ENCODE measurements at regions of chr15 and their contacts with region 1.

Region 1: DNA sequence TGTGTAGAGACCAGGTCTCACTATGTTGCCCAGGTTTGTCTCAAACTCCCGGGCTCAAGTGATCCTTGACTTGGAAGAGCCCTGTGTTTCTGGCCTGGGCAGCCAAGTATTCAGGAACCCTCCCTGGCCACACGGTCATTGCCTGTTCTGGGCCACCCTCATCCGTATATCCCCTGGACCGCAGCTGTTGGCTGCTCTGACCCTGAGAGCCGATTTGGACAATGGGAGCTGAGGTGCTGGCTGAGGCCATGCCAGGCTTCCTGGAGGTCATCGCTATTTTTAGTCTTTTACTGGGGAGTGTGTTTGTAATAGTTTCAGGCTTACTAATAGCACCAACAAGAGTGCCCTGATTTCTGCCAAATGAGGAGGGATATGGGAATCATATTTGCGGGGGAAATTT is 60.7 kb downstream of the ADAMTS7 start:
- DNase-seq: no peak
- ATAC-seq: no peak
- H3K4me3 ChIP-seq: no peak overlapping the region
- H3K4me3 Mint-ChIP-seq: peak overlapping the region; percentile 32
- H3K27ac ChIP-seq: no peak overlapping the region
- H3K27ac Mint-ChIP-seq: no peak overlapping the region
- H3K4me1 ChIP-seq: peaks cover 0 to 11% of the 10 kb centered on the region in 2 donors
- H3K4me1 Mint-ChIP-seq: peaks cover 5% of the 10 kb centered on the region
- H3K27me3 ChIP-seq: no peaks in the 10 kb centered on the region
- H3K27me3 Mint-ChIP-seq: no peaks in the 10 kb centered on the region
- CTCF ChIP-seq: no peak

Region 2: DNA sequence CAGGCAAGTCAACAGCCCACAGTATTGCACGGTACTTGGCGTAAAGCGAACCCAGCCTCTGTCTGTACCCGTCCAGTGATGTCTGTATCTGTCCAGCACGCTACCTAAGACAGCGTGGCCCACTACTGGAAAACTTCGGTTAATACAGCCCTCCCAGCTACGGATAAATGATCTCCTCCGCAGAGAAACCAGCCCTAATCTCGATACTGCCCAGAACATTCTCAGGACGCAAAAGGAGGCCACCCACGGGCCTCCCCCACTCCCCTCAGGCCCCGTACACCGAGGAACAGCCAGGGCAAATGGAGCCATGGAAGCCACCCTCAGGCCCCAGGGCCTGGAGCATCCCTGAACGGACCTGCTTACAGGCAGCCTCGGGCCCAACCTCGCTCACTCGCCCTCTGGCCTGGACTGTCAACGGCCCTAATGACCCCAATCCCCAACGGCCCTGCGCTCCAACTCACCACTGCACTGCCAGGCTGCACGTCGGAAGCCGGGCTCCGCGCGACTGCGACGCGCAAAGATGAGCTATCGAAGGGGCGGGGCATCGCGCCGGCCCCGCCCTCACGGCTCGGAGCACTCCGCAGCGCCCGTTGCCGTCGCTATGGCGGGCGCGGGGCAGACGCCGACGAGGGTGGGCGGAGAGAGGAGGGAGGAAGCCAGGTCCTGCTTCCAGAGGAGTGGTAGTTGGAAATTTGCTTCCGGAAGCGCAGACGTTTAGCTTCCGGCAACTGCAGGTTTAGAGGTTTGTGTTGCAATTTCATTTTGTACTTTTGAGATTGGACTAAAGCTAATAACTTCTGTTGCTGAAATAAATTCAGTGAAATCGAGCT is 451.2 kb before region 1 on chr15 and contains the start of gene SKIC8:
- CTCF ChIA-PET with region 1: no interaction called
- POLR2A ChIA-PET with region 1: no interaction called
- intact Hi-C with region 1: loop called (anchors 10 kb)
- DNase-seq: peak; percentile 94
- ATAC-seq: peak; percentile 98
- H3K4me3 ChIP-seq: peak within 1 kb of the TSS; percentile 64 to 85 (median 75)
- H3K4me3 Mint-ChIP-seq: peak within 1 kb of the TSS; percentile 100
- H3K27ac ChIP-seq: peak within 1 kb of the TSS; percentile 41 to 74
- H3K27ac Mint-ChIP-seq: peak within 1 kb of the TSS; percentile 93
- H3K4me1 ChIP-seq: peaks cover 10 to 11% of the 10 kb centered on the region in 2 donors
- H3K4me1 Mint-ChIP-seq: peaks cover 21% of the 10 kb centered on the region
- H3K27me3 ChIP-seq: peaks cover 0 to 2% (median 0%) of the 10 kb centered on the region in 4 experiments
- H3K27me3 Mint-ChIP-seq: no peaks in the 10 kb centered on the region
- CTCF ChIP-seq: no peak
- total RNA-seq, gene SKIC8: 34.4 and 40.2 TPM in 2 replicates

Region 3: DNA sequence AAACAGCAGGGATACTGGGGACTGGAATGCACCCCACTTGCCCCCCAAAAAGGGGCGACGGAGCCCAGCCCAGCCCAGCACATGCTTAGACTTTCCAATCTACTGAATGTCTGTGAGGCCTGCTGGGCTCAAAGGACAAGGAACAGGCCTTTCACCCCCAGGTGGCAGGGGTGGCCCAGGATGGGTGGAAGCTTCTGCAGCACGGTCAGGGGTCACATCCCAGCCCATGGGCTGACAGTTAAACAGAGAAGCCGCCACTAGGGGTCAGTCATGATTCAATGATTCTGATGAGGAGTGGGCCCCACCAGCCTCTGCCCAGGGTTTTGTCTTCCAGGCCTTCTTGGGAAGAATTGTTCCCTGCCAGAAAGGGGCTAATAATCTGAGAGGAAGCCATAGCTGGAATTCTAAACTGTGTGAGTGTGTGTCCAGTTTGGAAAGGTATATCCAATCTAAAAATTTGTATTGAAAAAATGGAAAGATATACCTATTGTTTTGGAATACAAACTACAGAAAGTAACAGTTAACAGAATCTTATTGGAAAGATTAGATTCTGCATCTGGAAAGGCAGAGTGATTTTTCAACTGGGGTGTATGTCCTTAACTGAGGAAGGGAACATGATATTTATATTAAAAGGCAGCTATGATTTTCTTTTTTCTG is 111.8 kb before region 1 on chr15:
- CTCF ChIA-PET with region 1: interaction called, 4 read pairs
- POLR2A ChIA-PET with region 1: no interaction called
- intact Hi-C with region 1: loop called (anchors 5 kb)
- DNase-seq: peak; percentile 52
- ATAC-seq: peak; percentile 51
- H3K4me3 ChIP-seq: no peak overlapping the region
- H3K4me3 Mint-ChIP-seq: no peak overlapping the region
- H3K27ac ChIP-seq: no peak overlapping the region
- H3K27ac Mint-ChIP-seq: no peak overlapping the region
- H3K4me1 ChIP-seq: peaks cover 12% of the 10 kb centered on the region in 2 donors
- H3K4me1 Mint-ChIP-seq: peaks cover 10% of the 10 kb centered on the region
- H3K27me3 ChIP-seq: peaks cover 0 to 21% (median 4%) of the 10 kb centered on the region in 4 experiments
- H3K27me3 Mint-ChIP-seq: peaks cover 10% of the 10 kb centered on the region
- CTCF ChIP-seq: peak; percentile 53

Region 4: DNA sequence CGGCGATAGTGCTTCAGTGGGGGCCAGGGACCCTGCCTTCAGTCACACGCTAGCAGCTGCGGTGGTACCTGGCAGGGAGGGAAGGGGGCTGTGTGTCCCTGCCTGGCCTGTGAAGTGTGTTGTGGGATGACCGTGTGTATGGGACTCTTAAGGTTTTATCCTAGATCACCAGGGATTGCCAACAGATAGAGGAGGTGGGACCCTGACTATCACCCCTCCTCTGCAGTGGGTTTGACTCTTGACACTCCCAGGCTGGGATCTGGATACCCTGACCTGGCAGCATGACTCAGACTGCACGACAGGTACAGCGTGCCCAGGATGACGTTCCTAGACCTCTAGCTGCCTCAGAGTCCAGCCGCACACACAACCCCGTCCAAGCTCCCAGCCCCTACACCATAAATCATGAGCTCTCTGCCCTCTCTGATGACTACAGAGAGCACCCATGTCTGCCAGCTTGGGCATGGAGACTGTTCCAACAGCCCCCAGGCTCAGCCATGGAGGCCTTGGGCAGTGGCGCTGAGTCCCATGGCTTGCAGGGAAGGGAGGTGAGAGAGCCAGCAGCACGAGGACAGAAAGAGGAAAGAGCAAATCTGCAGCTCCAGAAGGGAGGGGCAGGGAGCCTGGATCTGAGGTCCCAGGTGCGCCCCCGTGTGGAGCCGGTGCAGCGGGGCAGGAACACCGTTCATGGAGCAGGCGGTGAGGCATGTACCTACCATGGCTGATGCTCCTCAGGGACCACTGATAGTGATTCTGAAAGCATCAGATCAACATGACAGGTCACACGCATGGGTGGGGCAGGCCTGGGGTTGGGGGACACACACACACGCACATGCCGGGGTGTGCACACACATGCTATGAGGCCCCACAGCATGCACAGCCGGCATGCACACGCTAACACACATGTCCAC is 10.3 kb before region 1 on chr15:
- CTCF ChIA-PET with region 1: interaction called, 12 read pairs
- POLR2A ChIA-PET with region 1: no interaction called
- intact Hi-C with region 1: no loop called
- DNase-seq: peak; percentile 60
- ATAC-seq: peak; percentile 69
- H3K4me3 ChIP-seq: no peak overlapping the region
- H3K4me3 Mint-ChIP-seq: no peak overlapping the region
- H3K27ac ChIP-seq: no peak overlapping the region
- H3K27ac Mint-ChIP-seq: no peak overlapping the region
- H3K4me1 ChIP-seq: no peaks in the 10 kb centered on the region
- H3K4me1 Mint-ChIP-seq: peaks cover 10% of the 10 kb centered on the region
- H3K27me3 ChIP-seq: peaks cover 0 to 5% (median 0%) of the 10 kb centered on the region in 4 experiments
- H3K27me3 Mint-ChIP-seq: peaks cover 8% of the 10 kb centered on the region
- CTCF ChIP-seq: peak; percentile 55

Region 5: DNA sequence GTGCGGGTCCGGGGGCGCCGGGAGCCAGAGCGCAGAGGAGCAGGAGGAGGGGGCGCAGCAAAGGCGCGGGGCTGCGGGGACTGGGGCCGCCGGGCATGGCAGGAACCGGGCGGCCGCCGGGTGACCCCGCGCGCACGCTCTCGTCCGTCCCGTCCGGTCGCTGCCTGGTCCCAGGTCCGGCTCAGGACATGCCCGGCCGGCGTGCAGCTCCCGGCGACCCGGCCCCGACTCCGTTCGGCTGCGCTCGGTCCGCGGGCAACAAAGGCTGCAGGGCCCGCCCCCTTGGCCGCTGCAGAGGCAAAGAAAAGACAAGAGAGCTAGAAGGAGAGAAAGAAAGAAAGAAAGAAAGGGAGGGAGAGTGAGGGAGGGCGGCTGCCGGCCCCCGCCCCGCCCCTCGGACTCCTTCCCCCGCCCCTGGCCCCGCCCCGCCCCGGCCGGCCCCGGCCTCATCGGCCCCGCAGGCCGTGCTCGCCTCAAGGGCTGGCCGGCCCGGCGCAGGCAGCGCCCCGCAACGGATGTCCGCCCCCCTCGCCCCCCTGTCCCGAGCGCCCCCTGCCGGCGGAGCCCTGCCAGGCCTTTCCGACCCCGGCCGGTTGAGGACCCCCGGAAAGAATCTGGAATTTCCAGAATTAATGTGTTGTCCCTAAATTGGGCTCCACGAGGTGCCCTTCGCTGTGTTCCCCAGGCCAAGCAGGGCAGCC is 60.7 kb after region 1 on chr15 and contains the start of gene ADAMTS7:
- CTCF ChIA-PET with region 1: interaction called, 19 read pairs
- POLR2A ChIA-PET with region 1: no interaction called
- intact Hi-C with region 1: loop called (anchors 1 kb)
- DNase-seq: peak; percentile 62
- ATAC-seq: peak; percentile 92
- H3K4me3 ChIP-seq: peak within 1 kb of the TSS; percentile 11 to 71 (median 52)
- H3K4me3 Mint-ChIP-seq: peak within 1 kb of the TSS; percentile 90
- H3K27ac ChIP-seq: no peak within 1 kb of the TSS
- H3K27ac Mint-ChIP-seq: peak within 1 kb of the TSS; percentile 69
- H3K4me1 ChIP-seq: peaks cover 15 to 21% of the 10 kb centered on the region in 2 donors
- H3K4me1 Mint-ChIP-seq: peaks cover 16% of the 10 kb centered on the region
- H3K27me3 ChIP-seq: peaks cover 0 to 43% (median 15%) of the 10 kb centered on the region in 4 experiments
- H3K27me3 Mint-ChIP-seq: peaks cover 21% of the 10 kb centered on the region
- CTCF ChIP-seq: peak; percentile 74
- total RNA-seq, gene ADAMTS7: 16.6 and 18.0 TPM in 2 replicates

Measured in B cell (primary cell).